Activated CD4-positive, alpha-beta T cell treated with anti-CD3 and anti-CD28 coated beads, Interleukin-2, amount 10 ng/mL, durations not matched to agents 7 days and 5 days (primary cell): ENCODE measurements at regions of chr3 and their contacts with region 1.

Region 1: DNA sequence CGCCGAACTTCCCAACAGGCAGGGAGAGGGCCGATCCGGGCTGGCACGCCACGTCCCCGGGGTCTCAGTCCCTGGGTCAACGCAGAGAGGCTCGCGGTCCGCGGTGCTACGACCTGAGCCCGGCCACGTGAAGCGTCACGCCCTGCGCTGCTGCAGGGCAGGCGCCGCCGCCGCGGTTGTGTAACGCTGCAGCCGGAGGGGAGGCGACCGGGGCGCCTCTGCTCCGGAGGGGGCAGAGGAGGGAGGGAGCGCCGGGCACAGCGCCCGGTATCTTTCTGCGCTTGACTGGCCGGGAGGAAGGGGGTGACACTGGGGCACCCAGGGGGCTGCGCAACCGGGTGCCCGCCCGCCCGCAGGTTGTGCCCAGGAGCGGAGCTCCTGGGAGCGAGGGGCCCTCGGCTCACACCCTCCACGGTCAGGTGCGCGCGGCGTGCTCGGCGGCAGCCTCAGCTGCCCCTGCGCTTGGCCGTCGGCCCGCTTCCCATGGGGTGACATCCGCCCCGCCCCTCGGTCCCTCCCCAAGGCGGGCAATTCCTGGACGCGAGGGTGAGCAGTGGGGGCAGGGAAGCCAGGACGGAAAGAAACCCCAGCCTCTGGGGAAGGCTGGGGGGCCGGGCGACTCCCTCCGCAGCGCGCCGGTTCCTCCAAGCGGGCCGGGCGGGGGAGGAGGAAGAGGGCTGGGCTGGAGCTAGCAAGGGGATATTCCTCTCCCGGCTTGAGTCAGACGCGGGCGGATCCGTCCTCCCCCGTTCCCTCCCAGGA is 852 bp upstream of the BHLHE40 start:
- DNase-seq: peak; percentile 83
- H3K4me3 Mint-ChIP-seq: peak overlapping the region; percentile 99
- H3K27ac Mint-ChIP-seq: peak overlapping the region; percentile 98
- H3K4me1 Mint-ChIP-seq: peaks cover 49% of the 10 kb centered on the region
- H3K27me3 Mint-ChIP-seq: no peaks in the 10 kb centered on the region

Region 2: GRCh38 chr3:4376499-4376898 is 601.9 kb before region 1 on chr3:
- CTCF ChIA-PET with region 1: no interaction called
- POLR2A ChIA-PET with region 1: no interaction called
- DNase-seq: no peak
- H3K4me3 Mint-ChIP-seq: no peak overlapping the region
- H3K27ac Mint-ChIP-seq: no peak overlapping the region
- H3K4me1 Mint-ChIP-seq: no peaks in the 10 kb centered on the region
- H3K27me3 Mint-ChIP-seq: no peaks in the 10 kb centered on the region

Region 3: DNA sequence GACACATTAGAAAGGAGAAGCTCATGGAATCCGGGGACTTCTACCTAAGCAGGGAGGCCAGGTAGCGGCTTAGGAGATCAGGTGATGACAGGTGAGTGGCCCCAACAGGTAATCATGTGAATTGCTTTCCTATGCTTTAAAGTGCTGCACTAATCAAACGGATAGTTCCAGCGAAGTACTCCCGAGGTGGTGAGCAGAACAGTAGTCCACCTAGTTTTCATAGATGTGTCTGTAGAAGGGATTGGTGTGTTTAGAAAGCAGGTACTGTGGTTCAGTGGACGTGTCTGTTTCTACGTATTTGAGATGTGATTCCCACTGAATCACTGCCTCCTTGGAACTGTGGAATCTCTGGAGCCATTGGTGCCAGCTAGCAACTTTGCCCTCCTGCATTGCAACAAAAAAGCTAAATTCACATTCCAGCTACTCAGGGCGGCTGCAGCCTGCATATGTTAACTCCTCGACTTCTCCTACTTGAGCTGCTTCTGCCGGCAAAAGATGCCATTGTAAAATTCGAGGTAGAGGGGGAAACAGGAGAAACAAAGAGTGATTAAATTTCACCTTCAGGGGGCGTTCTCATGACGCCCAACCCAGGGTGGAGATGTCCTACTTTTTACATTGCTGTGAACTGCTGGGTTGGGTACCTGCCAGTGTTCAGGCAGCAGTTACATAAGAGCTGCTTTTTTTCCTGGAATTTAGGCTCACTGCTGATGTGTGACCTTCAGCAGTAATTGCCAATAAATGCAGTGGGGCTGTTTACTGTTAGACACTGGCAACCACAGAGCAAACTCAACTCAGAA is 257.9 kb before region 1 on chr3:
- CTCF ChIA-PET with region 1: interaction called, 13 read pairs
- POLR2A ChIA-PET with region 1: interaction called, 3 read pairs
- DNase-seq: peak; percentile 24
- H3K4me3 Mint-ChIP-seq: no peak overlapping the region
- H3K27ac Mint-ChIP-seq: no peak overlapping the region
- H3K4me1 Mint-ChIP-seq: peaks cover 50% of the 10 kb centered on the region
- H3K27me3 Mint-ChIP-seq: no peaks in the 10 kb centered on the region

Region 4: DNA sequence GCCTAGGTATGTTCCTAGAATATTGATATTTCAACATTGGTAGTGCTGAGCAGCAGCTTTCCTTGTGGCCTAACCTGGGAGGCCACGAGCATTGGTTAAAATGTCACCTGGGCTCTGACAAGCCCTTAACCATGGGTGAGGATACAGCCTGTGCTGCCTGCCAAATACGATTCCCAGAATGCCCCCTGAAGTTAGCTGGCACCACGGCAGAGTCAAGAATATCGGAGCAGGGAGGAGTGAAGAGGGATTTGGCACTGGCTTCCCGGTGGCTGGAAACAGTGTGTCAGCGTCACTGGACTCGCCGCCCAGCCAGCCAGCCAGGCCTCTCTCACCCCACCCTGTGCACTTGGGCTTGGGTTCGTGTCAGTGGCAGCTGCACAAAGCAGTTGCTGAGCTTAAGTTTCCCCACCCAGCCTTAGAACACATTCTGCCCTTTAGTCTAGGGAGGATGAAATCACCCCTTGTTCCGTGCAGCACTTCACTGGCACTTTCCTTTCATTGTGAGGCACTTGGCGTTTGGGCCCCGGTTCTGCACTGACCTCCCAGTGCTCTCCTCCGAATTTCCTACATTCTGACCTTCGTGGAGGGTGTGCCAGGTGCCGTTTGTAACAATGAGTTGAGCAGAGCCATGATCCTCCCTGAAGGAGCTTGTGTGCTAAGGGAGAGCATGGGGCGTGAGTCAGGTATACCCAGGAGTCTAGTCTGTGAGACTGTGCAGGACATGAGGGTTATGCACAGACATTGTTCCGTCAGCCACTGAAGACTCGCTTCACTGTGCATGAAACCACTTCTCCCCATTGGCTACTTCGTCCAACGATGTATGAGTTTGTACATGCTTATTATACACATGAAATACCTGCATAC is 151.9 kb before region 1 on chr3:
- CTCF ChIA-PET with region 1: interaction called, 21 read pairs
- POLR2A ChIA-PET with region 1: interaction called, 5 read pairs
- DNase-seq: no peak
- H3K4me3 Mint-ChIP-seq: peak overlapping the region; percentile 74
- H3K27ac Mint-ChIP-seq: peak overlapping the region; percentile 88
- H3K4me1 Mint-ChIP-seq: peaks cover 97% of the 10 kb centered on the region
- H3K27me3 Mint-ChIP-seq: no peaks in the 10 kb centered on the region

Region 5: DNA sequence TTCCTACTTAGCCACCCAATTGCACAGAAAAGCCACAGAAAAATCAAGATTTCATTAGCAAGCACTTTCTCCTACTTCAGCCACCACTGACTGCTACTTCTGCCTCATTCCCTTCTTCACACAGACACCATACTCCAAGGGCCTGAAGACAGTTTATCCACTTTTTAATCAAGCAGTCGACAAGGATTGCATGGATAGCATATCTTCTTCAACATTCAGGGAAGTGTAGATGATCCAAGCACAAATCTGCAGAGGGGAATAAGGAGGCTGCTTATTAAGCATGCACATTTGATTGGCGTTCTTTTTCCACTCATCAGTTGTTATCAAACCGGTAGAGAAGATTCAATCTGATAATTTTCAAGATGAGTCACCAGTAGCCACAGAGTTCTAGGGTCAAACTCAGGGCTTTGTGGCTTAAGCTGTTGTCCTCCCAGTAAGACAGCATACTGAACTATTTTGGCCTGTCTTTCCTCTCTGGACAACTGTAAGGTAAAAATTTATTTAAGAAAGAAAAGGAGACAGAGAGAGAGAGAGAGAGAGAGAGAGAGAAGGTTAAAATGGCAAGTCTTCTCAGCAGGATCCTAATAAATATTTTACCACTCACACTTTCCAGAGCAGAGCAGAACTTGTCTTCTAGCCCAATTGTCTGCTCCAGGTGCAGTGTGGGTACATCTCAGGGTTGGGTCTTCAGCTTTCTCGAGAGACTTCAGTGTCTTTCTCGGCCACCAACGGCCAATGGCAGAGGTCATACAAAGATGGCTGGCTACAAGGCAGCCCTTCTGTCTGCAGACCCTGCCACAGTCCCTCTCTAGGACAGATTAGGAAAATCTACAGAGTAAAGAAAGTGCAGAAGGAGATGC is 79.7 kb before region 1 on chr3:
- CTCF ChIA-PET with region 1: interaction called, 13 read pairs
- POLR2A ChIA-PET with region 1: interaction called, 3 read pairs
- DNase-seq: no peak
- H3K4me3 Mint-ChIP-seq: no peak overlapping the region
- H3K27ac Mint-ChIP-seq: peak overlapping the region; percentile 58
- H3K4me1 Mint-ChIP-seq: peaks cover 49% of the 10 kb centered on the region
- H3K27me3 Mint-ChIP-seq: no peaks in the 10 kb centered on the region

Region 6: DNA sequence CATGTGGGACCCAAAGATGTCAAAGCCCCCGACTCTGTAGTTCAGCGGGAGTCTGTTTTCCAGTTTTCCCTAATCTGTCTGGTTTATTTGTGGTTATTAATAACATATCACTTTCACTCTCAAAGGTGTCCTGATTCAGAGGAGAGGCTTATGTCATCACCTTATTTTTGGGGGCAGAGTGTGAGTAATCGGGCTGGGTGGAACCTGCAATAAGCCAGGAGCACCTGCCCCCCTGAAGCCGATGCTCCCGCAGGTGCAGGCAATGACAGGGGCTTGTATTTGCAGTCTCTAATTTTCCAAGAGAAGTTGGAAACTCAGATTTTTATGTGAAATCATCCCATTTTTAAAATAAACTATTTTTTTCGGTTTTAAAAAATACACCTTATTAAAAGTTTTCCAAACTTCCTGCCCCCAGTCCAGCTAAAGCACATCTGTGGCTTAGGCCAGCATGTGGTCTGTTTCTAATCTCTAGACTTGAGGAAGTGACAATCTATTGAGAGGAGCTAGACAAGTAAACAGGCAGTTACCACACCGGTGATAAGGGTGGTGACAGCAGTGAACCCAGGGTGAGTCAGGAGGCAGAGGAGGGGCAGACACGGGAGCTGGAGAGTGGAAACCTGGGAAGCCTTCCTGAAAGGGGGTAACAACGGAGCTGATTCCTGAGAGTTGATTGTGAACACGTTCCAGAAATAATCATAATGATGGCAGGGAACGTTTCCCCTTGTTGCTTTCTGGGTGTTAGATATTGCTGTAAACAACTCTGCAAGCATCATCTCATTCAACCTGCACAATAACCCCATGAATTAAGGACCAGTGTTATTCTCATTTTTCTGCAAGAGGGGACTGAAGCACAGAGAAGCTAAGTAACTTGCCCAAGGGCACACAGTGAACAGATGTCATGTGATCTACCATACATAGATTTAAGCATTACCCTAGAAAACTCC is 38.1 kb after region 1 on chr3:
- CTCF ChIA-PET with region 1: interaction called, 197 read pairs
- POLR2A ChIA-PET with region 1: interaction called, 12 read pairs
- DNase-seq: peak; percentile 52
- H3K4me3 Mint-ChIP-seq: no peak overlapping the region
- H3K27ac Mint-ChIP-seq: peak overlapping the region; percentile 71
- H3K4me1 Mint-ChIP-seq: peaks cover 89% of the 10 kb centered on the region
- H3K27me3 Mint-ChIP-seq: peaks cover 2% of the 10 kb centered on the region

Region 7: GRCh38 chr3:5057857-5058324 is 79.5 kb after region 1 on chr3:
- CTCF ChIA-PET with region 1: interaction called, 16 read pairs
- POLR2A ChIA-PET with region 1: interaction called, 3 read pairs
- DNase-seq: peak; percentile 84
- H3K4me3 Mint-ChIP-seq: no peak overlapping the region
- H3K27ac Mint-ChIP-seq: no peak overlapping the region
- H3K4me1 Mint-ChIP-seq: peaks cover 26% of the 10 kb centered on the region
- H3K27me3 Mint-ChIP-seq: peaks cover 7% of the 10 kb centered on the region

Region 8: GRCh38 chr3:5260992-5261501 is 282.7 kb after region 1 on chr3:
- CTCF ChIA-PET with region 1: no interaction called
- POLR2A ChIA-PET with region 1: no interaction called
- DNase-seq: no peak
- H3K4me3 Mint-ChIP-seq: no peak overlapping the region
- H3K27ac Mint-ChIP-seq: peak overlapping the region; percentile 76
- H3K4me1 Mint-ChIP-seq: peaks cover 6% of the 10 kb centered on the region
- H3K27me3 Mint-ChIP-seq: no peaks in the 10 kb centered on the region

Region 9: GRCh38 chr3:5479229-5479799 is 500.9 kb after region 1 on chr3:
- CTCF ChIA-PET with region 1: no interaction called
- POLR2A ChIA-PET with region 1: no interaction called
- DNase-seq: no peak
- H3K4me3 Mint-ChIP-seq: no peak overlapping the region
- H3K27ac Mint-ChIP-seq: no peak overlapping the region
- H3K4me1 Mint-ChIP-seq: no peaks in the 10 kb centered on the region
- H3K27me3 Mint-ChIP-seq: no peaks in the 10 kb centered on the region